ENCODE measurements at regions of chr3 and their contacts with region 1.

Region 1: GRCh38 chr3:19146685-19147650 is 1.3 kb upstream of the KCNH8 start:
- DNase-seq: peak; percentile 25 to 88 (median 61)
- ATAC-seq: peak; percentile 75
- H3K4me3 ChIP-seq: peak overlapping the region; percentile 72
- H3K4me3 Mint-ChIP-seq: peak overlapping the region; percentile 90 to 95 (median 93)
- H3K27ac ChIP-seq: peak overlapping the region; percentile 59
- H3K27ac Mint-ChIP-seq: peak overlapping the region; percentile 25 to 94 (median 84)
- H3K4me1 ChIP-seq: peaks cover 3 to 17% of the 10 kb centered on the region in 2 donors
- H3K4me1 Mint-ChIP-seq: peaks cover 8 to 28% (median 21%) of the 10 kb centered on the region in 7 donors
- H3K27me3 ChIP-seq: no peaks in the 10 kb centered on the region
- H3K27me3 Mint-ChIP-seq: peaks cover 40 to 63% (median 53%) of the 10 kb centered on the region in 5 donors

Region 2: GRCh38 chr3:18419232-18419631 is 727.7 kb before region 1 on chr3:
- CTCF ChIA-PET with region 1: no interaction called
- POLR2A ChIA-PET with region 1: no interaction called
- intact Hi-C with region 1: loop called in 1 of 2 experiments (anchors 10 kb)
- DNase-seq: no peak
- ATAC-seq: no peak
- H3K4me3 ChIP-seq: peak overlapping the region; percentile 0
- H3K4me3 Mint-ChIP-seq: peak overlapping the region in 9 of 10 donors; percentile 83 to 100 (median 96)
- H3K27ac ChIP-seq: peak overlapping the region; percentile 97
- H3K27ac Mint-ChIP-seq: peak overlapping the region; percentile 85 to 96 (median 92)
- H3K4me1 ChIP-seq: peaks cover 13 to 53% of the 10 kb centered on the region in 2 donors
- H3K4me1 Mint-ChIP-seq: peaks cover 45 to 91% (median 80%) of the 10 kb centered on the region in 7 donors
- H3K27me3 ChIP-seq: no peaks in the 10 kb centered on the region
- H3K27me3 Mint-ChIP-seq: no peaks in the 10 kb centered on the region

Region 3: GRCh38 chr3:18725668-18726407 is 421.1 kb before region 1 on chr3:
- CTCF ChIA-PET with region 1: no interaction called
- POLR2A ChIA-PET with region 1: no interaction called
- intact Hi-C with region 1: no loop called
- DNase-seq: peak in 8 of 9 donors; percentile 50 to 76 (median 68)
- ATAC-seq: peak; percentile 80
- H3K4me3 ChIP-seq: peak overlapping the region; percentile 42
- H3K4me3 Mint-ChIP-seq: peak overlapping the region; percentile 57 to 88 (median 75)
- H3K27ac ChIP-seq: peak overlapping the region; percentile 74
- H3K27ac Mint-ChIP-seq: peak overlapping the region; percentile 95 to 100 (median 98)
- H3K4me1 ChIP-seq: peaks cover 54 to 61% of the 10 kb centered on the region in 2 donors
- H3K4me1 Mint-ChIP-seq: peaks cover 50 to 88% (median 80%) of the 10 kb centered on the region in 7 donors
- H3K27me3 ChIP-seq: no peaks in the 10 kb centered on the region
- H3K27me3 Mint-ChIP-seq: no peaks in the 10 kb centered on the region

Region 4: GRCh38 chr3:18964640-18965039 is 182.3 kb before region 1 on chr3:
- CTCF ChIA-PET with region 1: no interaction called
- POLR2A ChIA-PET with region 1: no interaction called
- intact Hi-C with region 1: no loop called
- DNase-seq: no peak
- ATAC-seq: no peak
- H3K4me3 ChIP-seq: no peak overlapping the region
- H3K4me3 Mint-ChIP-seq: no peak overlapping the region
- H3K27ac ChIP-seq: no peak overlapping the region
- H3K27ac Mint-ChIP-seq: no peak overlapping the region
- H3K4me1 ChIP-seq: no peaks in the 10 kb centered on the region
- H3K4me1 Mint-ChIP-seq: no peaks in the 10 kb centered on the region
- H3K27me3 ChIP-seq: no peaks in the 10 kb centered on the region
- H3K27me3 Mint-ChIP-seq: peaks cover 0 to 6% (median 4%) of the 10 kb centered on the region in 5 donors

Region 5: DNA sequence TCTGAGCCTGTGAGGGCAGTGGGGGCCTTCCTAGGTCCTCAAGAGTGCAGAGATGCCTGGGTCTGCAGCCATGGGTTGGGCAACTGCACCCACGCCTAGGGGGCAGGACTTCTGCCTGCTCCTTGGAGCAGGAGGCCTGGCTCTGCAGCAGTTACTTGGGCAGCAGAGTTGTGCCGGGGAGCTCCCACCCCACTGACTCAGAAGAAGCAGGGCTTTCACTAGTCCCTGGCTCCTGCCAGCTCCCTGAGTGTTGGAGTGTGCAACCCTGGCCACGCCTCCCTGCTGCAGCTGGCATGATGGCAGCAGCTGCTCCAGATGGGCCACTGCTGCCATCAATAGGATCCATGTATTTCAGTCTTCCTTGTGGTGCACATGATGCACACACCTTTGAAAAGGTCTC is 39.3 kb before region 1 on chr3:
- CTCF ChIA-PET with region 1: interaction called, 9 read pairs
- POLR2A ChIA-PET with region 1: interaction called, 3 read pairs
- intact Hi-C with region 1: loop called in 1 of 2 experiments (anchors 1 kb)
- DNase-seq: no peak
- ATAC-seq: no peak
- H3K4me3 ChIP-seq: no peak overlapping the region
- H3K4me3 Mint-ChIP-seq: no peak overlapping the region
- H3K27ac ChIP-seq: no peak overlapping the region
- H3K27ac Mint-ChIP-seq: no peak overlapping the region
- H3K4me1 ChIP-seq: no peaks in the 10 kb centered on the region
- H3K4me1 Mint-ChIP-seq: peaks cover 0 to 7% (median 0%) of the 10 kb centered on the region in 7 donors
- H3K27me3 ChIP-seq: no peaks in the 10 kb centered on the region
- H3K27me3 Mint-ChIP-seq: peaks cover 0 to 32% (median 10%) of the 10 kb centered on the region in 5 donors

Region 6: DNA sequence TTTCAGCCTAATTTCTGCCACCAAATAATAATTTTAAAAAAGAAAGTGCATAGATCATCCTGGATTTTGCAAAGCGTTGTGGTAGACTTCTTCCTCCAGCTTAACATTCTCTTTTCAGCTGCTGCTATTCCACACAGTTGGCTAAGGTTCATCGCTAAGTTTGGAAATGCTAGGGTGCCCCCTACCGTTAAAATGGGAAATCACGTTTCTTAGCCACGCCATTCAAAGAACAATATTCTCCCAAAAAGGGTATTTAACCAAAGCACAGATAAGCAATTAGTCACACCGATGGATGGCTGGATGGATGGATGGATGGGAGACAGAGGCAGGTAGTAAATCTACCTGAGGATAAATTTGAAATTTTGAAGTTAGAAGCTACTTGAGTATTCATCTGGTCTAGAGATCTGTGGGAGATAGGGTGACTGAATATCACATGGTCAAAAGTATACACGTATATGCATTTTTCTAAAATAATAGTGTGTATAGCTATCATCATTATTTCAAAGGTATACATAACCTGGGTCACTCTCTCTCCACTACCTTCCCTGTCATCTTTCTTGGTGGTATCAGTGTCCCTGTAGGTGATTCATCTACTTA is 719.9 kb after region 1 on chr3:
- CTCF ChIA-PET with region 1: no interaction called
- POLR2A ChIA-PET with region 1: no interaction called
- intact Hi-C with region 1: loop called in 1 of 2 experiments (anchors 5 kb)
- DNase-seq: peak in 6 of 9 donors; percentile 26 to 56 (median 33)
- ATAC-seq: peak; percentile 52
- H3K4me3 ChIP-seq: no peak overlapping the region
- H3K4me3 Mint-ChIP-seq: no peak overlapping the region
- H3K27ac ChIP-seq: no peak overlapping the region
- H3K27ac Mint-ChIP-seq: no peak overlapping the region
- H3K4me1 ChIP-seq: no peaks in the 10 kb centered on the region
- H3K4me1 Mint-ChIP-seq: peaks cover 0 to 4% (median 0%) of the 10 kb centered on the region in 7 donors
- H3K27me3 ChIP-seq: peaks cover 0 to 4% of the 10 kb centered on the region in 2 donors
- H3K27me3 Mint-ChIP-seq: peaks cover 14 to 24% (median 15%) of the 10 kb centered on the region in 5 donors

Measured in naive thymus-derived CD4-positive, alpha-beta T cell (primary cell).